GM23248 (cell line): ENCODE measurements at regions of chr2 and their contacts with region 1.

Region 1: GRCh38 chr2:101831351-101831865 is 133.9 kb downstream of the MAP4K4 start:
- DNase-seq: peak; percentile 85
- H3K4me3 ChIP-seq: no peak overlapping the region
- H3K27ac ChIP-seq: peak overlapping the region; percentile 81
- H3K4me1 ChIP-seq: peaks cover 51% of the 10 kb centered on the region
- H3K27me3 ChIP-seq: no peaks in the 10 kb centered on the region

Region 2: DNA sequence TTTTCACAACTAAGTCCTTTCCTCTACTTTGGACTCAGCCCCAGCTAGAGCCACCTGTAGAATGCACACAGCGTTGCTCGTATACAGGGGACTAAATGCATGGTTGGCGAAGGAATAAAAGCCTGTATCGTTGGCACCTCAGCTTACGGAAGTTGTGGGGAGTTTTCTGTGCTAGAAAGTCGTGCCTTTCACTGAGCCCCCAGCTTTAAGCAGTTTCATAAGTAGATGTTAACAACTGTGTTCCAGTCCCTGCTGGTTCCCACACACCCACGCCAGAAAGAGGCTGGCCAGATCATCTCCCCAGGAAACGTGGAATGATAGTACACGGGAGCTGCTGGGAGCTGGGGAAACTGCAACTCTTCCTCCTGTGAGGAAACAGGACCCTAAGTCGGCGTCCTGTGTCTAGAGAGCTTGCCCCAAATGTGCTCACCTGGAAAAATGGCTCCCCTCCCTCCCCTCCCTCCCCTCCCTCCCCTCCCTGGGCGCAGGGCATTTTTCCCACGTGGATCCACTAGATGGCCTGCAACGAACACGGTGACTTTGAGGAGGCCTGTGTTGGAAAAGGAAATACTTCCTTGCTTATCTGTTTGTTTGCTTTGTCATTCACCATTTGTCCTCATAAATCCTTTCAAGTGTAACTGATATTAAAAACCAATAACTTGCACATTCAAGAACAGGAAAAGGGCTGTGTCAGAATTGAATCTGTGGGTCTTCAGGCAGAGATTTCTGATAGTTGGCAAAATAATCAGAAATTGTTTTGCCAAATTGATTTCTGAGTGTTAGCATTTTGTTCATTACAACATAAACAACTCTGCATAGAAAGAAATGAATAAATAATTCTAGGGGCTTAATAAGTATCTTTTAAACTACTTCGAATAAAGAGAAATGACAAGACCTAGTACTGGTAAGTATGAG is 312.6 kb before region 1 on chr2:
- in situ Hi-C with region 1: loop called (anchors 25 kb)
- DNase-seq: peak; percentile 78
- H3K4me3 ChIP-seq: peak overlapping the region; percentile 47
- H3K27ac ChIP-seq: peak overlapping the region; percentile 95
- H3K4me1 ChIP-seq: peaks cover 62% of the 10 kb centered on the region
- H3K27me3 ChIP-seq: no peaks in the 10 kb centered on the region

Region 3: GRCh38 chr2:101697124-101698013 is 134.0 kb before region 1 on chr2 and contains the start of gene MAP4K4:
- in situ Hi-C with region 1: loop called (anchors 5 kb)
- DNase-seq: peak; percentile 91
- H3K4me3 ChIP-seq: peak within 1 kb of the TSS; percentile 96
- H3K27ac ChIP-seq: peak within 1 kb of the TSS; percentile 65
- H3K4me1 ChIP-seq: peaks cover 16% of the 10 kb centered on the region
- H3K27me3 ChIP-seq: no peaks in the 10 kb centered on the region
- total RNA-seq, gene MAP4K4: 107 and 115 TPM in 2 replicates

Region 4: GRCh38 chr2:101912545-101912944 is 81.1 kb after region 1 on chr2:
- in situ Hi-C with region 1: no loop called
- DNase-seq: no peak
- H3K4me3 ChIP-seq: no peak overlapping the region
- H3K27ac ChIP-seq: no peak overlapping the region
- H3K4me1 ChIP-seq: no peaks in the 10 kb centered on the region
- H3K27me3 ChIP-seq: no peaks in the 10 kb centered on the region

Region 5: GRCh38 chr2:101961296-101962191 is 130.1 kb after region 1 on chr2:
- in situ Hi-C with region 1: no loop called
- DNase-seq: peak; percentile 97
- H3K4me3 ChIP-seq: peak overlapping the region; percentile 14; the same call in 1 of the 2 replicates
- H3K27ac ChIP-seq: peak overlapping the region; percentile 96
- H3K4me1 ChIP-seq: peaks cover 36% of the 10 kb centered on the region
- H3K27me3 ChIP-seq: no peaks in the 10 kb centered on the region